ENCODE measurements at regions of chr2 and their contacts with region 1.

Region 1: GRCh38 chr2:216991563-216991962 is 131.7 kb upstream of the TNP1 start:
- DNase-seq: no peak
- H3K4me3 ChIP-seq: no peak overlapping the region
- H3K27ac ChIP-seq: no peak overlapping the region
- H3K4me1 ChIP-seq: no peaks in the 10 kb centered on the region
- H3K27me3 ChIP-seq: no peaks in the 10 kb centered on the region
- CTCF ChIP-seq: no peak

Region 2: GRCh38 chr2:216687646-216688045 is 303.9 kb before region 1 on chr2:
- CTCF ChIA-PET with region 1: interaction called, 14 read pairs
- POLR2A ChIA-PET with region 1: no interaction called
- intact Hi-C with region 1: no loop called
- DNase-seq: no peak
- H3K4me3 ChIP-seq: no peak overlapping the region
- H3K27ac ChIP-seq: no peak overlapping the region
- H3K4me1 ChIP-seq: peaks cover 5% of the 10 kb centered on the region; the same call in 1 of the 2 replicates
- H3K27me3 ChIP-seq: no peaks in the 10 kb centered on the region
- CTCF ChIP-seq: no peak; the same call in 1 of the 2 replicates

Measured in PC-9 (cell line).